ENCODE measurements at regions of chr20 and their contacts with region 1.

Region 1: DNA sequence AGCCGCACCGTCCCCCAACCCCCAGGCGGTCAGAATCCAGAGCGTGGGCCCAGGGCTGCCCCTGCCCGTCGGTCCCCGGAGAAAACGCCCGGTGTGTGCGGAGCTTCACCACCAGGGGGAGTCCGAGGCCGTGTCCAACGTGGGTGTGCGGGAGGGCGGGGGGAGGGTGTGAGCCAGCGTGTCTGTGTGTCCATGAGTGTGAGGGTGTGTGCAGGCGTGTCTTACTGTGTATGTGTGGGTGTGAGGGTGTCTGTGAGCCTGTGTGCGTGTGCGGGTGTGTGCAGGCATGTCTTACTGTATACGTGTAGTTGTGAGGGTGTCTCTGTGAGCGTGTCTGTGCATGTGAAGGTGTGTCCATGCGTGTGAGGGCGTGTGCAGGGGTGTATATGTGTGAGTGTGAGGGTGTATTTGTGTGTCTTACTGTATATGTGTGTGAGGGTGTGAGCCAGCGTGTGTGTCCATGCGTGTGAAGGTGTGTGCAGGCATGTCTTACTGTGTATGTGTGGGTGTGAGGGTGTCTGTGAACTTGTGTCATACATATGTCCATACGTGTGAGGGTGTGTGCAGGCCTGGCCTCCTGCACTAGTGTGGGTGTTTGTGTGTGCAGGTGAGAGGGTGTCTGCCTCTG is 24.6 kb upstream of the GATA5 start:
- DNase-seq: peak; percentile 84
- H3K4me3 ChIP-seq: no peak overlapping the region
- H3K27ac ChIP-seq: no peak overlapping the region
- H3K4me1 ChIP-seq: peaks cover 0 to 23% (median 14%) of the 10 kb centered on the region in 4 donors
- H3K27me3 ChIP-seq: peaks cover 0 to 19% (median 8%) of the 10 kb centered on the region in 3 donors
- CTCF ChIP-seq: peak; percentile 89 to 96 (median 94)
- EP300 ChIP-seq: no peak
- POLR2A ChIP-seq: no peak

Region 2: GRCh38 chr20:62583420-62583920 is 83.1 kb after region 1 on chr20:
- intact Hi-C with region 1: loop called (anchors 1 kb)
- DNase-seq: peak; percentile 78
- H3K4me3 ChIP-seq: no peak overlapping the region
- H3K27ac ChIP-seq: no peak overlapping the region
- H3K4me1 ChIP-seq: peaks cover 0 to 34% (median 24%) of the 10 kb centered on the region in 4 donors
- H3K27me3 ChIP-seq: peaks cover 7 to 70% (median 43%) of the 10 kb centered on the region in 3 donors
- CTCF ChIP-seq: peak in 2 of 4 experiments; percentile 10 to 32
- EP300 ChIP-seq: no peak
- POLR2A ChIP-seq: no peak

Region 3: GRCh38 chr20:62616728-62617621 is 116.6 kb after region 1 on chr20:
- intact Hi-C with region 1: loop called (anchors 1 kb)
- DNase-seq: peak; percentile 88
- H3K4me3 ChIP-seq: no peak overlapping the region
- H3K27ac ChIP-seq: peak overlapping the region; percentile 40 to 52 (median 49)
- H3K4me1 ChIP-seq: peaks cover 0 to 8% (median 2%) of the 10 kb centered on the region in 4 donors
- H3K27me3 ChIP-seq: no peaks in the 10 kb centered on the region
- CTCF ChIP-seq: peak; percentile 91 to 97 (median 94)
- EP300 ChIP-seq: peak in 1 of 4 donors; percentile 18
- POLR2A ChIP-seq: no peak

Region 4: GRCh38 chr20:62782149-62782892 is 282.0 kb after region 1 on chr20:
- intact Hi-C with region 1: loop called (anchors 10 kb)
- DNase-seq: no peak
- H3K4me3 ChIP-seq: no peak overlapping the region
- H3K27ac ChIP-seq: peak overlapping the region in 2 of 4 donors; percentile 28 to 61
- H3K4me1 ChIP-seq: peaks cover 0 to 31% (median 12%) of the 10 kb centered on the region in 4 donors
- H3K27me3 ChIP-seq: no peaks in the 10 kb centered on the region
- CTCF ChIP-seq: no peak
- EP300 ChIP-seq: no peak
- POLR2A ChIP-seq: no peak

Measured in sigmoid colon (tissue), 7 donors.